ENCODE measurements at regions of chr15 and their contacts with region 1.

Region 1: DNA sequence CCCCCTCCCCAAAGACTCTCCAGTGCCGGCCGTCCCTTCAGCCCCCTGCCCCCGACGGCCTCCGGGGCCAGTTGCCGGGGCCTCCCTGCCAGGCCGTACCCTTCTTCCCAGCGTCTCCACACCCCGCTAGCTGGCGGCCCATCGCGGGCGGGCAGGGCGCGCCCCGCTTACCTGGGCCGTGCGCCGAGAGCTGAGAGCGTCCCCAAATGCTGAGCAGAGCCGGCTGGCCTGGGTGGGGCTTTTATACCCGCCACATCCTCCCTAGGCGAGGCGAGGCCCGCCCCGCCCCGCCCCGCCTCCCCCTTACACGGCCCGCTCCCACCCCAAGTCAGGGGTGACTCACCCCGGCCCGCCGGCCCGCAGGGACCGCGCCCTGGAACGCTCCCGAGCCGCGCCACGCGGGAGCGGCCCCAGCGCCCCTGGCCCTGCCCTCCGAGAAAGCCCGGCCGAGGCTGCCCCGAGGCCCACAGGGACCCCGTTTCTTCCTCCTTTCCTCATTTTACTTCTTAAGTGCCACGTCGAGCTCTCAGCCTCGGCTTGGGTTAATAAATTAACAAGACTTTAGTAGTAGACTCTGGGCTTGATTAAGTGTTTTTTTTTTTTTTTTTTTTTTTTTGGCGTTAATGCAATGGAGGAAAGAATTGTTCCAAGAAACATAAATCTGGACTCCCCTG is at the start of gene ANXA2:
- DNase-seq: peak; percentile 88 to 94 (median 90)
- ATAC-seq: peak; percentile 66 to 85 (median 84)
- H3K4me3 ChIP-seq: peak within 1 kb of the TSS; percentile 66 to 90 (median 75)
- H3K27ac ChIP-seq: peak within 1 kb of the TSS; percentile 73 to 99 (median 94)
- H3K4me1 ChIP-seq: peaks cover 3 to 45% (median 35%) of the 10 kb centered on the region in 12 donors
- H3K27me3 ChIP-seq: no peaks in the 10 kb centered on the region
- CTCF ChIP-seq: no peak
- POLR2A ChIP-seq: peak in 1 of 2 donors; percentile 83
- total RNA-seq, gene ANXA2: 106 to 523 (median 207) TPM

Region 2: GRCh38 chr15:60362321-60363086 is 35.4 kb before region 1 on chr15:
- intact Hi-C with region 1: loop called in 8 of 10 experiments (anchors 1 to 5 kb)
- DNase-seq: peak in 1 of 5 donors; percentile 42
- ATAC-seq: peak in 3 of 4 donors; percentile 71 to 72 (median 71)
- H3K4me3 ChIP-seq: no peak overlapping the region
- H3K27ac ChIP-seq: peak overlapping the region in 10 of 12 donors; percentile 33 to 80 (median 50)
- H3K4me1 ChIP-seq: peaks cover 6 to 63% (median 32%) of the 10 kb centered on the region in 12 donors
- H3K27me3 ChIP-seq: no peaks in the 10 kb centered on the region
- CTCF ChIP-seq: no peak
- POLR2A ChIP-seq: no peak

Region 3: GRCh38 chr15:60370869-60371700 is 26.8 kb before region 1 on chr15:
- intact Hi-C with region 1: loop called in 1 of 10 experiments (anchors 2 kb)
- DNase-seq: peak in 4 of 5 donors; percentile 65 to 86 (median 76)
- ATAC-seq: peak; percentile 63 to 81 (median 76)
- H3K4me3 ChIP-seq: peak overlapping the region in 1 of 12 donors; percentile 7
- H3K27ac ChIP-seq: peak overlapping the region; percentile 73 to 92 (median 80)
- H3K4me1 ChIP-seq: peaks cover 4 to 77% (median 64%) of the 10 kb centered on the region in 12 donors
- H3K27me3 ChIP-seq: no peaks in the 10 kb centered on the region
- CTCF ChIP-seq: no peak
- POLR2A ChIP-seq: no peak

Region 4: DNA sequence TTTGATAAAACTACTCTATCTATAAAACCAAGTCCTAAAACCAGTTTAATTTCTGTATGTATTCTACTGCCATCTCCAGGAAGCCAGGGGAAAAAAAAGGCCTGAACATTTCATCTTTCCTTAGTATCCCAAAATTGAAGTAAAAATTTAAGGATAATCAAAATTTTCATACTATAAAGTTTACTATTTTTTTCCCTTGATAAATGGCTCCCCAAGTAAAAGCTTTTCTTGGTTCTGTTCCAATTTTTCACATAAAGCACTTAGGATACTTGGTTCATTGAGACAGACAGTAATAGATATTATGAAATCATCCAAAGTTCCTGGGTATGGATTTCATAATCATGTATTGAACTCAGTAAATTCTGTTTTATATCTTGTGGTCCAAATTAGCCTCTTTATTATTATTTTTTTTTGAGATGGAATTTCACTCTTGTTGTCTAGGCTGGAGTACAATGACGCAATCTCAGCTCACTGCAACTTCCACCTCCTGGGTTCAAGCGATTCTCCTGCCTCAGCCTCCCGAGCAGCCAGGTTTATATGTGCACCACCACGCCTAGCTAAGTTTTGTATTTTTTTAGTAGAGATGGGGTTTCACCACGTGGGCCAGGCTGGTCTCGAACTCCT is 46.5 kb after region 1 on chr15:
- intact Hi-C with region 1: loop called in 1 of 10 experiments (anchors 5 kb)
- DNase-seq: no peak
- ATAC-seq: no peak
- H3K4me3 ChIP-seq: no peak overlapping the region
- H3K27ac ChIP-seq: no peak overlapping the region
- H3K4me1 ChIP-seq: peaks cover 0 to 4% (median 0%) of the 10 kb centered on the region in 12 donors
- H3K27me3 ChIP-seq: no peaks in the 10 kb centered on the region
- CTCF ChIP-seq: peak; percentile 43 to 73 (median 60)
- POLR2A ChIP-seq: no peak

Region 5: DNA sequence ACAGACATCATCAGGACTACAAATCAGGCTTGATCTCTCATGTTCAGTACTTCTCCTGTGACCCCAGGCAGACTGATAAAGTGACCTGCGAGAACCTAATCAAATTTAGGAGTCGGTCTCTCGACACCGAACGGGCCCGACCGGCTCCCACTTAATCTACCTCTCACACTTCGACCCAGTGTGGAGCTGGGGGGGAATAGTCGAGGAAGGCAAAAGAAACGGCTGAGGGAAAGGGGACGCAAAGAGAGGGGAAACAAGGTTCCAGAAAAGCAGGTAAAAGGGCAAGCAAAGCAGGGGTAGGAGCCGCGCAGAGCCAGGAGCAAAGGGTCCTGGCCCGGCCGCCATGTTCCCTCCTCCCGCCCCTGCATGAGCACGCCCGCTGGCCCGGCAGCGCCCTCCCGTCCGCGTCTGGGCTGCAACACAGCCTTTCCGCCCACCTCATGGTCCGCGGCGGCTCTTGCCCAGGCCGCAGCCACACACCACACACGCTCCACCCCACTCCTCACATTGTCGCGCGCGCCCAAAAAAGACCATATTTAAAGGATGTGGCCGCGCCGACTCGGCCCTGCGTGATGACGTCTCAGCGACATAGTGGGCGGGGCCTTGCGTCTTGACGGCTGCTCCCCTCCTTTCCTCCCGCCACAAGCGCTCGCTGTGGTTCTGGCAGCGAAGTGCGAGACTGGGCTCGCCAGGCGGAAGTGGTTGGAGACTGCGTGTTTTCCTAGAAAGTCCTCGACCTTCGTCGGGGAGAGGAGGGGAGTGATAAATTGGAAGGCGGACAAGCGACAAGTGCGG is 80.9 kb after region 1 on chr15 and contains the start of gene ICE2:
- intact Hi-C with region 1: loop called in 1 of 10 experiments (anchors 2 kb)
- DNase-seq: peak; percentile 96 to 98 (median 97)
- ATAC-seq: peak; percentile 92 to 98 (median 96)
- H3K4me3 ChIP-seq: peak within 1 kb of the TSS; percentile 60 to 90 (median 73)
- H3K27ac ChIP-seq: peak within 1 kb of the TSS; percentile 90 to 98 (median 92)
- H3K4me1 ChIP-seq: peaks cover 3 to 43% (median 30%) of the 10 kb centered on the region in 12 donors
- H3K27me3 ChIP-seq: no peaks in the 10 kb centered on the region
- CTCF ChIP-seq: peak in 2 of 12 donors; percentile 13 to 29
- POLR2A ChIP-seq: peak; percentile 72 to 81
- total RNA-seq, gene ICE2: 9.1 to 28.8 (median 23.7) TPM

Measured in heart left ventricle (tissue), 16 donors.